Activated CD4-positive, alpha-beta T cell treated with anti-CD3 and anti-CD28 coated beads, Interleukin-2, amount 10 ng/mL, durations not matched to agents 24 days and 14 days (primary cell): ENCODE measurements at regions of chr2 and their contacts with region 1.

Region 1: DNA sequence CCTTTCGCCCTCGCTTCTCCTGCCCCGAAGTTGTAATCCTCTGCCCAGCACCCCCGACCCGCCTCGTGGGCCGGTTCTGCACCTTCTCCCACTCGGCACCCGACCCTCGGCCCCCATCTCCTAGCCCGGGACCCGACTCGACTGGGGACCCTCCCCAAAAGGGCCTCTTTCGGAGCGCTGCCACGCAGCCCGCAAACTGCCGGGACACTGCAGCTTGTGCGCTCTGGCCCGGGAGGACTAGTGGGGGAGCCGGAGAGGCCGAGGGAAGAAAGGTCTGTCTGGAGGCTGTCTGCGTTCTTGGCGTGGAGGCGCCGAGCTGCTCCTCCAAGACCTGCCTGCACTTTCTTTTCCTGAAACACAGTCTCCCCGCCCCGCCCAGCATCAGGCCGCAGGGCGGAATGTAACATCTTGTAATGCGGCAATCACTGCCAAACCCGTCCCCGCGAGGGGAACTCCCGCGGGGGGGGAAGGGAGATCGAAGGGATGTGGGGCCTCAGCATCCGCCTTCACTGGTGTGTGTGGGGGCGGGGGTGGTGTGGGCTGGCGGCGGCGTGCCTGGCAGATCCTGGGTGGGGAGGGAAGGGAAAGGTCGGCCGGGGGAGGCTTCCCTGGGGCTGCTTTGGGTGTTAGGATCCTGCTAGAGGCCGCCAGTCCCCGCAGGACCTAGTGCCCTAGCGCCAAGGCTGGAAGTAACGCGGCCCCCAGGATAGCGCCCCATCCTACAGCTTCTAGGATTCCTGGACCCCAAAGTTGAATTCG is 7.4 kb downstream of the DLX2 start:
- DNase-seq: peak; percentile 89
- H3K4me3 Mint-ChIP-seq: peak overlapping the region; percentile 82
- H3K27ac Mint-ChIP-seq: peak overlapping the region; percentile 37
- H3K4me1 Mint-ChIP-seq: peaks cover 28% of the 10 kb centered on the region
- H3K27me3 Mint-ChIP-seq: peaks cover 76% of the 10 kb centered on the region

Region 2: DNA sequence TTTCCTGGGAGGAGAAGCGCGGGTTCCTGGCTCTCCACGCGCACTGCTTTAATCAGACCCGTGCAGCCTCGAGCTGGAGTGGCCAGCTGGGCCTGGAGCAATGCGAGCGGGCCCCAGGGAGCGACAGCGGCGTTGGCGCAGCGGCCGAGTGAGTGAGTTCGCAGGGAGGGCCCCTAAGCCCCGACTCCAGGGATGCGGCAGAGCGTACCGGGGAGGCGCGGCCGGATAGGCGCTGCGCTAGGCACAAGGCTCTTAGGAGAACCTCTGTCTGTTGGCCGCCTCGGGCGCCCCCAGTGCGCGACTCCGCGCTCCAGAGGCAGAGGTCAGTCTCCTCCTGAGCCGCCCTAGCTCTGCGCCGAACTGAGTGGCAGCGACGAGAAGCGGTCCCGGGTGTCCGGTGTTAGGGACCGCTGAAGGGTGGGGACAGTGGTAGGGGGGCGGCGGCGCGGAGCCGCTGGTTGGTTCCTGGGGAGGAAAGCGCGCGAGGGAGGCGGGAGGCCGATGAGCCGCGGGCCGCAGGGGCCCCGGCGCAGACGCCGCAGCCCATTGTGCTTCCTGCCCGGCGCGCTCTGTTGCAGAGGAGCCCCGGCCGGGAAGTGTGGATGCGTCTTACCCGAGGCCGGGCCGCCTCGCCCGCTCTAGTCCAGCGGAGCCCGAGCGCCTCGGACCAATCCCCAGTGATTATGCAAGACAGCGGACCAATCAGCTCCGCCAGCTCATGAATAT is 10.4 kb before region 1 on chr2:
- intact Hi-C with region 1: loop called (anchors 1 kb)
- DNase-seq: peak; percentile 83
- H3K4me3 Mint-ChIP-seq: peak overlapping the region; percentile 78
- H3K27ac Mint-ChIP-seq: peak overlapping the region; percentile 81
- H3K4me1 Mint-ChIP-seq: peaks cover 34% of the 10 kb centered on the region
- H3K27me3 Mint-ChIP-seq: peaks cover 90% of the 10 kb centered on the region

Region 3: GRCh38 chr2:172193331-172194089 is 98.2 kb after region 1 on chr2:
- intact Hi-C with region 1: no loop called
- DNase-seq: no peak
- H3K4me3 Mint-ChIP-seq: no peak overlapping the region
- H3K27ac Mint-ChIP-seq: no peak overlapping the region
- H3K4me1 Mint-ChIP-seq: peaks cover 5% of the 10 kb centered on the region
- H3K27me3 Mint-ChIP-seq: peaks cover 11% of the 10 kb centered on the region